ENCODE measurements at regions of chr6 and their contacts with region 1.

Region 1: GRCh38 chr6:33200219-33201146 is at the starts of genes RXRB and SLC39A7:
- DNase-seq: peak; percentile 100
- H3K4me3 ChIP-seq: peak within 1 kb of the TSS; percentile 75 to 92 (median 76)
- H3K27ac ChIP-seq: peak within 1 kb of the TSS; percentile 95
- H3K4me1 ChIP-seq: peaks cover 30% of the 10 kb centered on the region
- H3K27me3 ChIP-seq: no peaks in the 10 kb centered on the region
- CTCF ChIP-seq: no peak
- POLR2A ChIP-seq: peak; percentile 77
- total RNA-seq, gene RXRB: 43.4 and 45.6 TPM in 2 replicates
- total RNA-seq, gene SLC39A7: 129 and 138 TPM in 2 replicates

Region 2: DNA sequence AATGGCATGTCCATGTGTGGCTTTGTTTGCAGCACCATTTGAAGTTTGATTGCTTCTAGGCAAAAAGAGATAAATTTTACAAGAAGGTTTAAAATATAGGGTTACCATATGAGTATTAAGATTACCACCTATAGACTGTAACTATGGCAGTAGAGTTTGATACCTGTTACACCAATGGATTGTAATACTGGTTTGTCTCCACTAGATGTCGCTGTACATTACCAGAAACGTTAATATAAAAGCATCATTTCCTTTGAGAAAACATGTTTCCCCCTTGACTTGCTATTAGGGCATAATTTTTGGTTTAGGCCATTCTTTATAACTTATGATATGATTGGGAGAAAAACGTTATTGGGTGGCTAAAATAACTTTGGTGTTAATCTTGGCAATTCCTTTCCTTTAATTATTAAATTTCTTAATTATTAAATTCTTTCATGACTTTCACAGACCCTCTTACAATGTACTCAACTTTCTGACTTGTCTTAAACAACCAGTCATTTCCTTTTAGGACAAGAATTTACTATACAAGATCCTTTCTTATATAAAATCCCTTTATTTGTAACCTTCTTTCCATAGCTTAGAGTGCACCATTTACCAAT is 81.9 kb before region 1 on chr6:
- CTCF ChIA-PET with region 1: interaction called, 7 read pairs
- POLR2A ChIA-PET with region 1: no interaction called
- dilution Hi-C with region 1: no loop called
- intact Hi-C with region 1: loop called (anchors 1 kb)
- DNase-seq: peak; percentile 57
- H3K4me3 ChIP-seq: no peak overlapping the region
- H3K27ac ChIP-seq: no peak overlapping the region
- H3K4me1 ChIP-seq: no peaks in the 10 kb centered on the region
- H3K27me3 ChIP-seq: peaks cover 44 to 46% of the 10 kb centered on the region in 2 experiments
- CTCF ChIP-seq: peak; percentile 38 to 48
- POLR2A ChIP-seq: no peak

Region 3: GRCh38 chr6:33161354-33162331 is 38.8 kb before region 1 on chr6:
- CTCF ChIA-PET with region 1: interaction called, 26 read pairs
- POLR2A ChIA-PET with region 1: no interaction called
- dilution Hi-C with region 1: no loop called
- intact Hi-C with region 1: loop called (anchors 1 kb)
- DNase-seq: peak; percentile 63
- H3K4me3 ChIP-seq: peak overlapping the region; percentile 25 to 31 (median 30)
- H3K27ac ChIP-seq: no peak overlapping the region
- H3K4me1 ChIP-seq: no peaks in the 10 kb centered on the region
- H3K27me3 ChIP-seq: no peaks in the 10 kb centered on the region
- CTCF ChIP-seq: peak; percentile 94 to 98
- POLR2A ChIP-seq: no peak

Region 4: GRCh38 chr6:33172688-33173534 is 27.6 kb before region 1 on chr6:
- CTCF ChIA-PET with region 1: interaction called, 10 read pairs
- POLR2A ChIA-PET with region 1: no interaction called
- dilution Hi-C with region 1: no loop called
- intact Hi-C with region 1: no loop called
- DNase-seq: no peak
- H3K4me3 ChIP-seq: no peak overlapping the region
- H3K27ac ChIP-seq: no peak overlapping the region
- H3K4me1 ChIP-seq: no peaks in the 10 kb centered on the region
- H3K27me3 ChIP-seq: no peaks in the 10 kb centered on the region
- CTCF ChIP-seq: peak; percentile 26 to 34
- POLR2A ChIP-seq: no peak

Region 5: DNA sequence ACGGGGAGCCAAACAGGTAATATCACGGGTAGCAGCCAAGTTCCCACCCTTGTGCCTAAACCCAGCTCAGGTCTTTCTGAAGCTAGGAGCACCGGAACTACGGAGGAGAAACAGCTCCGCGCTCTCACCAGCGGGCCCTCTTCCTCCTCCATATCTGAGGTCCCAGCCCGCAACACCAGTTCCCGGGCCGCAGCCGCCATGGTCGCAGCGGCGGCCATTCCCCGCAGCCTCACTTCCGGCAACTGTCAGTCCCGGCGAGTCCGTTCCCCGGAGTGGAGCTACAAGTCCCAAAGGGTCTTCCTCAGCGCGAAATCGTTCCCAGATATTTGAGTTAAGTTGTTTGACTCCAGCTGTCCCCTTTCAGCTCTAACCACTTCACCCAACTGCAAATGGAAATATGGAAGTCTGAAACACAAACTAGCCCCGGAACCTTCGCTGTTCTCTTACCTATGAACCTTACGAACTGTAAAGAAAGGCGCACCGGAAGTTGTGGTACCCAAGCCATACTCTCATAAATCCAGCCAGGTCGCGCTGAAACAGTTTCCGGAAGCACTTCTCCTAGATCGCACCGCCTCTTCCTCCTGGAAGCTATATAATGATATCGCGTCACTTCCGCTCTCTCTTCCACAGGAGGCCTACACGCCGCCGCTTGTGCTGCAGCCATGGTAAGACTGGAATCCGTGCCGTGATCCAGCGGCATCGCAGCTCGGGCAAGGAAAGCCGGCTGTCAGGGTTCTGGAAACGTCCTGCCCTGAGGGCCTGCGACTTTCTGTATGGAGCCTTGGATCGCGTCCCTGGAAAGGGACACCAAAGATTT is 71.2 kb after region 1 on chr6 and contains the starts of genes RPS18 and VPS52:
- CTCF ChIA-PET with region 1: no interaction called
- POLR2A ChIA-PET with region 1: no interaction called
- dilution Hi-C with region 1: no loop called
- intact Hi-C with region 1: loop called (anchors 2 kb)
- DNase-seq: peak; percentile 99
- H3K4me3 ChIP-seq: peak within 1 kb of the TSS; percentile 83 to 96 (median 86)
- H3K27ac ChIP-seq: peak within 1 kb of the TSS; percentile 85
- H3K4me1 ChIP-seq: peaks cover 47% of the 10 kb centered on the region
- H3K27me3 ChIP-seq: no peaks in the 10 kb centered on the region
- CTCF ChIP-seq: no peak
- POLR2A ChIP-seq: peak; percentile 99
- total RNA-seq, gene RPS18: 2,193 and 2,336 TPM in 2 replicates
- total RNA-seq, gene VPS52: 43.8 and 49.2 TPM in 2 replicates

Region 6: GRCh38 chr6:33317669-33318425 is 117.4 kb after region 1 on chr6 and contains the start of gene ZBTB22:
- CTCF ChIA-PET with region 1: no interaction called
- POLR2A ChIA-PET with region 1: no interaction called
- dilution Hi-C with region 1: no loop called
- intact Hi-C with region 1: loop called (anchors 5 kb)
- DNase-seq: peak; percentile 99
- H3K4me3 ChIP-seq: peak within 1 kb of the TSS; percentile 60 to 87 (median 87)
- H3K27ac ChIP-seq: peak within 1 kb of the TSS; percentile 71
- H3K4me1 ChIP-seq: peaks cover 55% of the 10 kb centered on the region
- H3K27me3 ChIP-seq: no peaks in the 10 kb centered on the region
- CTCF ChIP-seq: no peak
- POLR2A ChIP-seq: no peak
- total RNA-seq, gene ZBTB22: 12.6 and 13.9 TPM in 2 replicates

Region 7: GRCh38 chr6:33344701-33345697 is 144.5 kb after region 1 on chr6:
- CTCF ChIA-PET with region 1: no interaction called
- POLR2A ChIA-PET with region 1: no interaction called
- dilution Hi-C with region 1: no loop called
- intact Hi-C with region 1: no loop called
- DNase-seq: peak; percentile 84
- H3K4me3 ChIP-seq: no peak overlapping the region
- H3K27ac ChIP-seq: no peak overlapping the region
- H3K4me1 ChIP-seq: no peaks in the 10 kb centered on the region
- H3K27me3 ChIP-seq: no peaks in the 10 kb centered on the region
- CTCF ChIP-seq: peak; percentile 41 to 54
- POLR2A ChIP-seq: no peak

Region 8: GRCh38 chr6:33410050-33410710 is 209.7 kb after region 1 on chr6:
- CTCF ChIA-PET with region 1: interaction called, 3 read pairs
- POLR2A ChIA-PET with region 1: no interaction called
- dilution Hi-C with region 1: no loop called
- intact Hi-C with region 1: loop called (anchors 1 kb)
- DNase-seq: peak; percentile 99
- H3K4me3 ChIP-seq: peak overlapping the region; percentile 41 to 85 (median 71)
- H3K27ac ChIP-seq: peak overlapping the region; percentile 73
- H3K4me1 ChIP-seq: peaks cover 10% of the 10 kb centered on the region
- H3K27me3 ChIP-seq: no peaks in the 10 kb centered on the region
- CTCF ChIP-seq: no peak
- POLR2A ChIP-seq: peak; percentile 60